Activated T-helper 1 cell treated with anti-CD3 and anti-CD28 coated beads, Interleukin-12 subunit alpha, Interleukin-12 subunit beta, Interleukin-2, Interleukin-4 antibody, amounts not matched to agents 30 ng/mL and 10 ng/mL and 1 ng/mL, durations not matched to agents 14 hours and 24 hours and 36 hours (primary cell): ENCODE measurements at regions of chr11 and their contacts with region 1.

Region 1: GRCh38 chr11:61827571-61828378 is at the start of gene FADS2:
- DNase-seq: peak; percentile 91
- H3K4me3 Mint-ChIP-seq: peak within 1 kb of the TSS; percentile 93
- H3K27ac Mint-ChIP-seq: peak within 1 kb of the TSS; percentile 96
- H3K4me1 Mint-ChIP-seq: peaks cover 50% of the 10 kb centered on the region
- H3K27me3 Mint-ChIP-seq: no peaks in the 10 kb centered on the region
- total RNA-seq, gene FADS2: 250 and 256 TPM in 2 replicates

Region 2: GRCh38 chr11:60906132-60906972 is 921.4 kb before region 1 on chr11 and contains the start of gene PRPF19:
- intact Hi-C with region 1: no loop called
- DNase-seq: peak; percentile 99
- H3K4me3 Mint-ChIP-seq: peak within 1 kb of the TSS; percentile 90
- H3K27ac Mint-ChIP-seq: peak within 1 kb of the TSS; percentile 90
- H3K4me1 Mint-ChIP-seq: peaks cover 38% of the 10 kb centered on the region
- H3K27me3 Mint-ChIP-seq: peaks cover 15% of the 10 kb centered on the region
- total RNA-seq, gene PRPF19: 221 and 222 TPM in 2 replicates

Region 3: DNA sequence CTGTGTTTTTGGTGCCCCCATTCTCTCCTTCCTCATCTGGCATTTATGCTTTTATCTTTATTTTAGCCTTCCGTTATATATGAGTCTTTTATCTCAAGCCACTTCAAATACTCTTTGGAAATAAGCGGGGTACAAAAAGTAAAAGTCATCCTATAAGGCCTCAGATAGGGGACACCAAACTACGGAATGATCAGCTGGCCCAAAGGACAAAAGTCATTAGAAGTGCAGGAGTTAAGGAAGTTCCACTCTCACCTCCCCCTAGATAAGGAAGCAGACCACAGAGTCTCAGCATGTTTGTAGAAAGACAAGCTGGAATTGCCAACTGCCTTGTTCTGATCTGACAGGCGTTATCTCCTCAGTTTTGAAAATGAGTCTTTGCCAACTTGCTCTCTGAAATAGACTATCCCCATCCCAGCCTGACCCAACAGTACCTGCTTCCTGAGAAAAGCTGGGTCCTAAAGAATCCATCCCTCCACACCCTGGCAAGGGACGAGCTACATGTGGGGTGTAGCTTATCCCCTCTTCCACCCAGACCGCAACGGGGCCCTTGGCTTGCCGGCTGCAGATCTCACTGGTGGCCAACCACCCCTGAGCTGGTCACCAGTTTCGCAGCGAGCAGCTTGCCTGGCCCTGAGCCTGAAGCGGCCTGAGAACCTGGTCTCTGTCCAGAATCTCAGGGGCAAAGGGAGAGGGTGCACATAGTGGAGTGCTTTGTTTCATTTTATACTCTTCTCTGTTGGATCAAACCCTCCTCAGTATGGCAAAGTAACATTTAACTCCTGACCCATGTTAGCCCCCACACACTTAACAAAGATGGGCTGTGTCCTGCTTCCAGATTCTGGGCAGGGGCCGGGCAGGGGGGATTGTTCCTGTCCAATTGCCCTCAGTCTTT is 14.1 kb after region 1 on chr11:
- intact Hi-C with region 1: no loop called
- DNase-seq: no peak
- H3K4me3 Mint-ChIP-seq: no peak overlapping the region
- H3K27ac Mint-ChIP-seq: peak overlapping the region; percentile 52
- H3K4me1 Mint-ChIP-seq: peaks cover 5% of the 10 kb centered on the region
- H3K27me3 Mint-ChIP-seq: no peaks in the 10 kb centered on the region

Region 4: GRCh38 chr11:61891331-61892084 is 63.7 kb after region 1 on chr11 and contains the start of gene FADS3:
- intact Hi-C with region 1: loop called (anchors 2 kb)
- DNase-seq: peak; percentile 64
- H3K4me3 Mint-ChIP-seq: peak within 1 kb of the TSS; percentile 88
- H3K27ac Mint-ChIP-seq: peak within 1 kb of the TSS; percentile 29
- H3K4me1 Mint-ChIP-seq: peaks cover 3% of the 10 kb centered on the region
- H3K27me3 Mint-ChIP-seq: peaks cover 6% of the 10 kb centered on the region
- total RNA-seq, gene FADS3: 9.0 and 14.2 TPM in 2 replicates

Region 5: GRCh38 chr11:61912530-61912898 is 84.7 kb after region 1 on chr11:
- intact Hi-C with region 1: no loop called
- DNase-seq: no peak
- H3K4me3 Mint-ChIP-seq: no peak overlapping the region
- H3K27ac Mint-ChIP-seq: no peak overlapping the region
- H3K4me1 Mint-ChIP-seq: peaks cover under 1% of the 10 kb centered on the region
- H3K27me3 Mint-ChIP-seq: peaks cover 18% of the 10 kb centered on the region